Right ventricle myocardium inferior (tissue), 1 donor: ENCODE measurements at regions of chr10 and their contacts with region 1.

Region 1: DNA sequence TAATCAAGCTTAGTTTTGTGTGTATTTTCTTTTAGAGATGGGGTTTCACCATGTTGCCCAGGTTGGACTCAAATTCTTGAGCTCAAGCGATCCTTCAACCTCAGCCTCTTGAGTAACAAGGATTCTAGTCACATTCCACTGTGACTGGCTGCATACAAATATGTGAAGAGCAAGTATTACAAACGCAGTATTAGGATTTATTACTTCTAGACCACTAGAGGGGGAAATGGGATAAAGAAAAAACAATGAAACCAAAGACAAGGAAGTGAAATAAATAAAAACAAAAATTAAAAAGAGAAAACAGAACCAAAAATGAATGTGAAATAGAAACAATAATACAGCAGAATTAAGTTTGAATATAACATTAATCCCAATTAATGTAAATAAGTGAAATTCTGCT is 308.7 kb downstream of the ANKRD30A start:
- DNase-seq: no peak
- ATAC-seq: no peak

Region 2: GRCh38 chr10:37269554-37270256 is 164.4 kb before region 1 on chr10:
- intact Hi-C with region 1: no loop called
- DNase-seq: no peak
- ATAC-seq: no peak

Region 3: DNA sequence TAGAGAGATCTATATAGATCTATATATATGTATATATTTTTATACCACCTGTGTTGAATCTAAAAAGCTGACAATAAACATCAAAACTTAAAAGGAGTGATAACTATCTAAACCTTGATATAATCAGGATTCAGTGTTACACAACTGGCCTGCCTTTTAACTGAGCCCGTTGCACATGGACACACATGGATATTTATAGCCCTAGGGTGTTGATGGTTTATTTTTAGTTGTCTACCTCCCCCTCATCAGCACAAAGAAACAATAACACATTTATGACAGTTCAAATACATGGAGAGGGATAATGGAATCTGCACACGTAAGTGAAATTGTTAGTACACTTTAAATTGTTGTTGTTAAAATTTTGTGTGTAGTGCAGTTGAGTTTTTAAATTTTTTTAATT is 86.4 kb after region 1 on chr10:
- intact Hi-C with region 1: loop called (anchors 10 kb)
- DNase-seq: no peak
- ATAC-seq: peak; percentile 77

Region 4: GRCh38 chr10:37754538-37755323 is 320.6 kb after region 1 on chr10:
- intact Hi-C with region 1: loop called (anchors 5 kb)
- DNase-seq: no peak
- ATAC-seq: peak; percentile 76